ENCODE measurements at regions of chr11 and their contacts with region 1.

Region 1: DNA sequence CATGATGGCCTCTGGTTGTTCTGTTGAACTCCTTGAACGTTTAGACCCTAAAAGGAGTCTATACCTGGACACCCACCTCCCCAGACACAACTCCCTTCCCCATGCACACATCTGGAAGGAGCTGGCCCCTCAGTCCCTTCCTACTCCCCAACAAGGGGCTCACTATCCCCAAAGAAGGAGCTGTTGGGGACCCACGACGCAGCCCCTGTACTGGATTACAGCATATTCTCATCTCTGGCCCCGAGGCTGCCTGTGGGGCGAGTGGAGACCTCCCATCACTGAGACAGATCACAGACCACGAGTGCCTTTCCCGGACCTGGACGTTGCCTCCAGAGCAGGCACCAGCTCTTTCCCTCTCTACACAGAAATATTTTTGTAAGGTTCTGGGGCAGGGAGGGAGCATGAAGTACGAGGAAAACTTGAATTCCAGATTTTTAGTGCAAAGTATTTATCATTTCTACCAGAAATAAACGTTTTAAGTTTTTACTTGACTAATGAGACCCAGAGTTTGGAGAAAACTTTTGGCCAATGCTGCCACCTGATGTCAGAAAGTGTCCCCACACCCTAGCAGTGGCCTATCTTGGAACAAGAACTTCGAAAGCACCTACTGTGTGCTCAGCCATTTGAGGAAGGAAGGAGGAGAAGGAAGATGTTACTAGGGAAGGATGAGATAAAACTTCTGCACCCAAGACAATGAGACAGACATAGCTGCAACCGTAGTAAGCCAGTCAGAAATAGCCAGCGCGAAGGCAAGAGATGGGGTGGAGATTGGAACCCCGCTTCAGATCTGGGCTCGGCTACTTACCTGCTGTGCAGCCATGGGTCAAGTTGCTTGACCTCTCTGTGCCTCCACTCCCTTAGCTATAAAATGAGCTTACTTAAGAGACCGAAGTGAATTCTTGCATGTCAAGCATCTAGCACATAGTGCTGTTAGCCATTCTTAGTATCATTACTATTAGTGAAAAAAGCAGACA is 10.2 kb upstream of the POU2F3 start:
- DNase-seq: peak in 2 of 7 donors; percentile 36 to 64
- H3K4me3 ChIP-seq: no peak overlapping the region
- H3K27ac ChIP-seq: no peak overlapping the region
- H3K4me1 ChIP-seq: peaks cover 7 to 11% of the 10 kb centered on the region in 2 donors
- H3K27me3 ChIP-seq: no peaks in the 10 kb centered on the region
- CTCF ChIP-seq: peak; percentile 32 to 76 (median 70)
- POLR2A ChIP-seq: no peak

Region 2: GRCh38 chr11:120172054-120172911 is 57.5 kb before region 1 on chr11:
- intact Hi-C with region 1: loop called (anchors 2 to 5 kb)
- DNase-seq: peak; percentile 70 to 90 (median 85)
- H3K4me3 ChIP-seq: no peak overlapping the region
- H3K27ac ChIP-seq: no peak overlapping the region
- H3K4me1 ChIP-seq: peaks cover 5 to 16% of the 10 kb centered on the region in 2 donors
- H3K27me3 ChIP-seq: no peaks in the 10 kb centered on the region
- CTCF ChIP-seq: peak; percentile 69 to 97 (median 92)
- POLR2A ChIP-seq: no peak

Region 3: GRCh38 chr11:120482149-120482548 is 252.4 kb after region 1 on chr11:
- intact Hi-C with region 1: no loop called
- DNase-seq: peak; percentile 65 to 85 (median 74)
- H3K4me3 ChIP-seq: no peak overlapping the region
- H3K27ac ChIP-seq: peak overlapping the region; percentile 27 to 81 (median 77)
- H3K4me1 ChIP-seq: peaks cover 0 to 6% of the 10 kb centered on the region in 2 donors
- H3K27me3 ChIP-seq: no peaks in the 10 kb centered on the region
- CTCF ChIP-seq: no peak
- POLR2A ChIP-seq: peak in 1 of 2 donors; percentile 30

Region 4: GRCh38 chr11:120601536-120601935 is 371.8 kb after region 1 on chr11:
- intact Hi-C with region 1: no loop called
- DNase-seq: peak in 1 of 7 donors; percentile 17
- H3K4me3 ChIP-seq: no peak overlapping the region
- H3K27ac ChIP-seq: no peak overlapping the region
- H3K4me1 ChIP-seq: peaks cover 0 to 7% of the 10 kb centered on the region in 2 donors
- H3K27me3 ChIP-seq: no peaks in the 10 kb centered on the region
- CTCF ChIP-seq: no peak
- POLR2A ChIP-seq: no peak

Measured in adrenal gland (tissue), 19 donors.